ENCODE measurements at regions of chr5 and their contacts with region 1.

Region 1: GRCh38 chr5:155833287-155833686 is 493.7 kb upstream of the SGCD start:
- DNase-seq: peak in 1 of 2 donors; percentile 2
- ATAC-seq: no peak
- H3K4me3 ChIP-seq: no peak overlapping the region
- H3K4me3 Mint-ChIP-seq: no peak overlapping the region
- H3K27ac ChIP-seq: no peak overlapping the region
- H3K27ac Mint-ChIP-seq: no peak overlapping the region
- H3K4me1 ChIP-seq: peaks cover 7% of the 10 kb centered on the region
- H3K4me1 Mint-ChIP-seq: peaks cover 0 to 5% of the 10 kb centered on the region in 2 donors
- H3K27me3 ChIP-seq: no peaks in the 10 kb centered on the region
- H3K27me3 Mint-ChIP-seq: no peaks in the 10 kb centered on the region
- CTCF ChIP-seq: no peak

Region 2: GRCh38 chr5:155106221-155106620 is 727.1 kb before region 1 on chr5:
- intact Hi-C with region 1: no loop called
- DNase-seq: no peak
- ATAC-seq: no peak
- H3K4me3 ChIP-seq: no peak overlapping the region
- H3K4me3 Mint-ChIP-seq: no peak overlapping the region
- H3K27ac ChIP-seq: no peak overlapping the region
- H3K27ac Mint-ChIP-seq: no peak overlapping the region
- H3K4me1 ChIP-seq: no peaks in the 10 kb centered on the region
- H3K4me1 Mint-ChIP-seq: no peaks in the 10 kb centered on the region
- H3K27me3 ChIP-seq: peaks cover 2% of the 10 kb centered on the region
- H3K27me3 Mint-ChIP-seq: peaks cover 0 to 3% of the 10 kb centered on the region in 2 donors
- CTCF ChIP-seq: no peak

Region 3: GRCh38 chr5:155773680-155774079 is 59.6 kb before region 1 on chr5:
- intact Hi-C with region 1: loop called (anchors 5 kb)
- DNase-seq: peak; percentile 54 to 75
- ATAC-seq: peak; percentile 96 to 100 (median 99)
- H3K4me3 ChIP-seq: no peak overlapping the region
- H3K4me3 Mint-ChIP-seq: no peak overlapping the region
- H3K27ac ChIP-seq: peak overlapping the region; percentile 9
- H3K27ac Mint-ChIP-seq: peak overlapping the region; percentile 43 to 81
- H3K4me1 ChIP-seq: peaks cover 23% of the 10 kb centered on the region
- H3K4me1 Mint-ChIP-seq: peaks cover 3 to 32% of the 10 kb centered on the region in 2 donors
- H3K27me3 ChIP-seq: no peaks in the 10 kb centered on the region
- H3K27me3 Mint-ChIP-seq: no peaks in the 10 kb centered on the region
- CTCF ChIP-seq: no peak

Region 4: DNA sequence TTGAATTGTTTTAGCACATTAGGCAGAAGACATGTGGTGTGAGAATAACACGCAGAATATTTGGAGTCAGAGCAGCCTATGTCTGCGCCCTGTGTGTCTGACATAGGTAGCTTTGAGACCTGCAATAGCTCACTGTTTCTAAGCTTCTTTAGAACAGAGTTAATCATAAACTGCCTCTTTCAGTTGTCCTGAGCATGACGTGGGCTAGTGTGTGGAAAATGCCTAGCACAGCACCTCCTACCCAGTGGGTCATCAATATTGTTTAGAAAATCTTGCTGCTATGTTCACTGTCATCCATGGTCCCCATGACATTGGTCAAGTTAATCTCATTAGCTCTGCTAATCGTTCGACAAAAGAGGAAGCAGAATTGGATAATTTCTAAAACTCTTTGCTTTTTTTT is 136.2 kb after region 1 on chr5:
- intact Hi-C with region 1: no loop called
- DNase-seq: no peak
- ATAC-seq: no peak
- H3K4me3 ChIP-seq: no peak overlapping the region
- H3K4me3 Mint-ChIP-seq: no peak overlapping the region
- H3K27ac ChIP-seq: no peak overlapping the region
- H3K27ac Mint-ChIP-seq: no peak overlapping the region
- H3K4me1 ChIP-seq: no peaks in the 10 kb centered on the region
- H3K4me1 Mint-ChIP-seq: no peaks in the 10 kb centered on the region
- H3K27me3 ChIP-seq: peaks cover 2% of the 10 kb centered on the region
- H3K27me3 Mint-ChIP-seq: peaks cover 0 to 10% of the 10 kb centered on the region in 2 donors
- CTCF ChIP-seq: no peak

Region 5: GRCh38 chr5:156197042-156197635 is 363.9 kb after region 1 on chr5:
- intact Hi-C with region 1: no loop called
- DNase-seq: no peak
- ATAC-seq: no peak
- H3K4me3 ChIP-seq: no peak overlapping the region
- H3K4me3 Mint-ChIP-seq: no peak overlapping the region
- H3K27ac ChIP-seq: no peak overlapping the region
- H3K27ac Mint-ChIP-seq: no peak overlapping the region
- H3K4me1 ChIP-seq: no peaks in the 10 kb centered on the region
- H3K4me1 Mint-ChIP-seq: no peaks in the 10 kb centered on the region
- H3K27me3 ChIP-seq: no peaks in the 10 kb centered on the region
- H3K27me3 Mint-ChIP-seq: no peaks in the 10 kb centered on the region
- CTCF ChIP-seq: no peak

Region 6: DNA sequence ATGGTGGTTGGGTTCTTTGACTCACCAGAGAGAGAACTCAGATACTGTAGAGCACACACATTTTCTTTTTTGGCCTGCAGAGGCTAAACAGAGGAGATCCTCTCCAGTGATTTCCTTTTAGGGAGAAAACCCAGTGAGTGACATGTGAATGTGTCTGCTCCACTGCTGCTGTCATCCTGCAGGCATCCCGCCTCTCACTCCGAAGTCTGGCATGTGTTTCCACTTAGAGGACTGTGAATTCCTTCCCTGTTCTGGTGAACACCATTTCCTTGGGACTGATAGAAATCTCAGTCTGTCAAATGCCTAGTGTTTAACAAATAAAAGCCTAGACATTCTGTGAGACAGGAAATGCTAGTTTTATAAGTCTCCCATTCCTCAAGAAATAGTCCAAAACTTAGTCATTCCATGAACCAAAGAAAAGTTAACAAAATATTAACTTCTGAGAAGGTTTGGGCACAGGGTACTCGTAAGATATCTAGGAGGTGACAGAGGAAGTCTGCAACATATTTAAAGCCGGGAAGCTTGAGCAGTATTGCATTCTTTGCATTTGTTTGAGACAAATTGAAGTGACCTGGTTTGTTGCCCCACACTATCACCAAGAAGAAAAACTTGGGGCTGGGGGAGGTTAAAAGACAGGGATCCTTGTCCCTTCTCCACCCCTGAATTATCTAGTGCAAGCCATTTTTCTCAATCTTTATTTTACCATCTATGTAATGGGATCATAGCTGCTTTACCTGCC is 1551.9 kb after region 1 on chr5:
- intact Hi-C with region 1: no loop called
- DNase-seq: no peak
- ATAC-seq: no peak
- H3K4me3 ChIP-seq: no peak overlapping the region
- H3K4me3 Mint-ChIP-seq: no peak overlapping the region
- H3K27ac ChIP-seq: no peak overlapping the region
- H3K27ac Mint-ChIP-seq: peak overlapping the region; percentile 20 to 63
- H3K4me1 ChIP-seq: peaks cover 10% of the 10 kb centered on the region
- H3K4me1 Mint-ChIP-seq: peaks cover 10 to 18% of the 10 kb centered on the region in 2 donors
- H3K27me3 ChIP-seq: no peaks in the 10 kb centered on the region
- H3K27me3 Mint-ChIP-seq: no peaks in the 10 kb centered on the region
- CTCF ChIP-seq: no peak

Measured in natural killer cell (primary cell).